GM12878 (cell line): ENCODE measurements at regions of chr11 and their contacts with region 1.

Region 1: DNA sequence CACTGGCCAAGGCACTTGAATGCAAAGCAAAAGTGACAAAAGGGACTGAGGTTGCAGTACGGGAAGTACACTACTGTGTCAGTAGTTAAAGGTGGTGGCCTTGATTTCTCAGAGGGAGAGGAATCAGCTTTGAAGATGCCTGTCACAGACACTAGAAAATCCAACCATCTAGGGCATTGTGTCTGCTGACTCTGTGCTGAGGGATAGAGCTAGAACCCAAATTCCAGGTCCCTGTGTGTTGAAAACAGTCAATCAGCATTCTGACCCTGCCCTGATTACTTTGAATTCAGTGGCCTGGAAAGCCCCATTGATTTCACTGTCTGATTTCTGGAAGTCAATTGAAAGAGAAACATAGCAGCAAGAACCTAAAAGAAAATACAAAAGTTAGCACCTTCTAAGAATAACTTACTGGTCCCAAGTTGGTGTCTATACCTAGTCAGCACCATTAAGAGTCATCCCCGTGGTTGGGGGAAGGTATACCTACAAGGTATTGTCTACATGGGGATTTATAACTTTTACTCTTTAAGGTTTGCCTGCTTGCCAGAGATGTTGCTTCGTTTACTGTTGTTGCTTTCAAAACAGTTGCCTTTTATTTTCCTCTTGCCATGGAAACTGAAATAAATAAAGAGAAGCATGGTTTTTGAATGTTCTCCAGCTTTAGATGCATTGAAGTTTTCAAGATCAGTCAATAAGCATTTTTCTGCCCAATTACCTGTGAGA is 97.3 kb downstream of the PDHX start:
- DNase-seq: no peak
- ATAC-seq: peak; percentile 73
- H3K4me3 ChIP-seq: peak overlapping the region; percentile 11; the same call in 1 of the 2 replicates
- H3K27ac ChIP-seq: peak overlapping the region; percentile 73
- H3K4me1 ChIP-seq: peaks cover 22% of the 10 kb centered on the region
- H3K27me3 ChIP-seq: no peaks in the 10 kb centered on the region
- CTCF ChIP-seq: no peak
- EP300 ChIP-seq: peak; percentile 58 to 63; a peak in 3 of 4 replicates
- POLR2A ChIP-seq: no peak
- RAD21 ChIP-seq: 0 out of 2 replicates have a peak, but pooled peaks have one; percentile 10

Region 2: DNA sequence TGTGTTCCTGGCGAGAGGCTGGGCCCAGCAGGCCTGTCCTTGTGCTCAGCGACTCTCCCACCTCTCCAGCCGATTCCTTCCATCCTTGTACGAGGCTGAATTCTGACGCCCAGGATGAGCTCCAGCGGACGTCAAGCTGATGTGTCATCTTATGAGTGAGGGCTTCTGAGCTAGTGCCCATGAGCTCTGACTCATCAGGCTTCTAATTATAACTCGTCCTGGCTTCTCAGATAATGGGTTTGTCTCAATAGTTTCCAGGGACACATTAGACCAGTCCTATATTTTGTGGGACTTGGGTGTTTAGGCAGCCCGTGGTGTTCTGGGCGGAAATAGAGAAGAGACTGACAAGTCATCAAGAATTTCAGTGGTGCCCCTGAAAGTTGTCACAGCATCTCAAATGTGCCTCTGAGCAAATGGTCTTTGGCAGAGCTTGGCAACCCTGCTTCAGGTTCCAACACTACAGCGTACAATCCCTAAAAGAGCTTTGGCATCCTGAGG is 17.1 kb after region 1 on chr11:
- CTCF ChIA-PET with region 1: interaction called, 3 read pairs
- POLR2A ChIA-PET with region 1: interaction called, 12 read pairs
- RAD21 ChIA-PET with region 1: interaction called, 20 read pairs
- SMC1A ChIA-PET with region 1: interaction called, 41 read pairs
- in situ Hi-C with region 1: no loop called
- intact Hi-C with region 1: no loop called
- DNase-seq: no peak
- ATAC-seq: peak; percentile 62
- H3K4me3 ChIP-seq: no peak overlapping the region
- H3K27ac ChIP-seq: no peak overlapping the region
- H3K4me1 ChIP-seq: peaks cover 25% of the 10 kb centered on the region
- H3K27me3 ChIP-seq: no peaks in the 10 kb centered on the region
- CTCF ChIP-seq: no peak
- EP300 ChIP-seq: no peak
- POLR2A ChIP-seq: no peak
- RAD21 ChIP-seq: no peak

Region 3: GRCh38 chr11:35126000-35126878 is 112.6 kb after region 1 on chr11:
- CTCF ChIA-PET with region 1: interaction called, 3 read pairs
- POLR2A ChIA-PET with region 1: interaction called, 8 read pairs
- RAD21 ChIA-PET with region 1: interaction called, 3 read pairs
- SMC1A ChIA-PET with region 1: interaction called, 8 read pairs
- in situ Hi-C with region 1: no loop called
- intact Hi-C with region 1: loop called (anchors 2 kb)
- DNase-seq: peak; percentile 88
- ATAC-seq: peak; percentile 84
- H3K4me3 ChIP-seq: peak overlapping the region; percentile 0; the same call in 1 of the 2 replicates
- H3K27ac ChIP-seq: peak overlapping the region; percentile 77
- H3K4me1 ChIP-seq: peaks cover 60% of the 10 kb centered on the region
- H3K27me3 ChIP-seq: no peaks in the 10 kb centered on the region
- CTCF ChIP-seq: peak; percentile 10 to 36 (median 14); a peak in 3 of 6 replicates
- EP300 ChIP-seq: peak; percentile 71 to 87
- POLR2A ChIP-seq: peak; percentile 63
- RAD21 ChIP-seq: peak; percentile 54

Region 4: DNA sequence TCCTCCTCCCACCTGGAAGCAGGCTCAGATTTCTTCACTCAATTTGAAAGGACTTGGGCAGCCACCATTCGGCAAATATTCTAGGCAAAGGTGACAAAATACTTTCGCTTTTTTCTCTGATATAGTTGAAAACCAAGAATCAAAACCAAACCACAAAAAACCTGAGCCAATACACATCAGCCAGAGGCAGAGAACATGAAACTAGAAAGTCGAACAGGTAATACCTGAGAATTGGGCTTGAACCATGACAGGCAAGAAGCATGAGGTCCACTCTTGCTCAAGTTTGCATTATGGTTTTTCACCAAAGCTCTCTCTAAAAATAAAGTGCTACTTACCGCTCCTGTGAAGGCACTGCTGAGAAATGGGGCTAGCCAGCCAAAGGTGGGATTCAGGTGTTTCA is 904.0 kb after region 1 on chr11:
- CTCF ChIA-PET with region 1: no interaction called
- POLR2A ChIA-PET with region 1: no interaction called
- RAD21 ChIA-PET with region 1: no interaction called
- SMC1A ChIA-PET with region 1: no interaction called
- in situ Hi-C with region 1: no loop called
- intact Hi-C with region 1: no loop called
- DNase-seq: no peak
- ATAC-seq: peak; percentile 71
- H3K4me3 ChIP-seq: peak overlapping the region; percentile 37; the same call in 1 of the 2 replicates
- H3K27ac ChIP-seq: no peak overlapping the region
- H3K4me1 ChIP-seq: peaks cover 54% of the 10 kb centered on the region
- H3K27me3 ChIP-seq: no peaks in the 10 kb centered on the region
- CTCF ChIP-seq: no peak
- EP300 ChIP-seq: peak in 1 of 2 experiments; percentile 36; a peak in 1 of 4 replicates
- POLR2A ChIP-seq: no peak
- RAD21 ChIP-seq: no peak